ENCODE measurements at regions of chr21 and their contacts with region 1.

Region 1: DNA sequence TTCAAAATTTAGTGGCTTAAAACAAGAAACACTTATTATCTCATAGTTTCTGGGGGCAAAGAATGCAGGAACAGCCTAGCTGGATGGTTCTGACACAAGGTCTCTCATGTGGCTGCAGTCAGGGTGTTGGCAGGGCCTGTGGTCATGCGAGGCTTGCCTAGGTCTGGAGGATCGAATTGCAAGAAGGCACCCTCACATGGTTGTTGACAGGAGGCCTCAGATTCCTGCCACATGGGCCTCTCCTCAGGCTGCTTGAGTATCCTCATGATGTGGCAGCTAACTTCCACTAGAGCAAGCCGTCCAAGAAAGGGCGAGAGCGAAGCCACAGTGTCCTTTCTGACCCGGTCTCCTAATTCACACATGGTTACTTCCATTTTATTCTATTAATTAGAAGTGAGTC is 6.2 kb upstream of the NRIP1 start:
- DNase-seq: no peak
- ATAC-seq: no peak
- H3K4me3 ChIP-seq: no peak overlapping the region
- H3K4me3 Mint-ChIP-seq: no peak overlapping the region
- H3K27ac ChIP-seq: no peak overlapping the region
- H3K27ac Mint-ChIP-seq: no peak overlapping the region
- H3K4me1 ChIP-seq: no peaks in the 10 kb centered on the region
- H3K4me1 Mint-ChIP-seq: peaks cover 8% of the 10 kb centered on the region
- H3K27me3 ChIP-seq: no peaks in the 10 kb centered on the region
- H3K27me3 Mint-ChIP-seq: peaks cover 5% of the 10 kb centered on the region
- CTCF ChIP-seq: no peak

Region 2: GRCh38 chr21:14889080-14889810 is 181.8 kb before region 1 on chr21:
- CTCF ChIA-PET with region 1: no interaction called
- POLR2A ChIA-PET with region 1: no interaction called
- intact Hi-C with region 1: no loop called
- DNase-seq: no peak
- ATAC-seq: no peak
- H3K4me3 ChIP-seq: no peak overlapping the region
- H3K4me3 Mint-ChIP-seq: no peak overlapping the region
- H3K27ac ChIP-seq: no peak overlapping the region
- H3K27ac Mint-ChIP-seq: no peak overlapping the region
- H3K4me1 ChIP-seq: no peaks in the 10 kb centered on the region
- H3K4me1 Mint-ChIP-seq: no peaks in the 10 kb centered on the region
- H3K27me3 ChIP-seq: no peaks in the 10 kb centered on the region
- H3K27me3 Mint-ChIP-seq: no peaks in the 10 kb centered on the region
- CTCF ChIP-seq: no peak

Region 3: GRCh38 chr21:15735409-15735808 is 664.4 kb after region 1 on chr21:
- CTCF ChIA-PET with region 1: no interaction called
- POLR2A ChIA-PET with region 1: interaction called, 5 read pairs
- intact Hi-C with region 1: loop called (anchors 5 kb)
- DNase-seq: no peak
- ATAC-seq: no peak
- H3K4me3 ChIP-seq: no peak overlapping the region
- H3K4me3 Mint-ChIP-seq: peak overlapping the region; percentile 47
- H3K27ac ChIP-seq: peak overlapping the region in 1 of 2 donors; percentile 27
- H3K27ac Mint-ChIP-seq: peak overlapping the region; percentile 84
- H3K4me1 ChIP-seq: peaks cover 30% of the 10 kb centered on the region
- H3K4me1 Mint-ChIP-seq: peaks cover 94% of the 10 kb centered on the region
- H3K27me3 ChIP-seq: no peaks in the 10 kb centered on the region
- H3K27me3 Mint-ChIP-seq: no peaks in the 10 kb centered on the region
- CTCF ChIP-seq: no peak